ENCODE measurements at regions of chr15 and their contacts with region 1.

Region 1: GRCh38 chr15:81400640-81401236 is 26.7 kb upstream of the TMC3 start:
- DNase-seq: peak in 3 of 9 experiments; percentile 17 to 73 (median 65)
- ATAC-seq: peak; percentile 62
- H3K4me3 ChIP-seq: no peak overlapping the region
- H3K4me3 Mint-ChIP-seq: no peak overlapping the region
- H3K27ac ChIP-seq: no peak overlapping the region
- H3K27ac Mint-ChIP-seq: no peak overlapping the region
- H3K4me1 ChIP-seq: no peaks in the 10 kb centered on the region
- H3K4me1 Mint-ChIP-seq: peaks cover 2% of the 10 kb centered on the region
- H3K27me3 ChIP-seq: no peaks in the 10 kb centered on the region
- H3K27me3 Mint-ChIP-seq: no peaks in the 10 kb centered on the region
- CTCF ChIP-seq: peak; percentile 78

Region 2: GRCh38 chr15:80660122-80660521 is 740.6 kb before region 1 on chr15:
- CTCF ChIA-PET with region 1: no interaction called
- POLR2A ChIA-PET with region 1: no interaction called
- intact Hi-C with region 1: no loop called
- DNase-seq: no peak
- ATAC-seq: no peak
- H3K4me3 ChIP-seq: no peak overlapping the region
- H3K4me3 Mint-ChIP-seq: no peak overlapping the region
- H3K27ac ChIP-seq: no peak overlapping the region
- H3K27ac Mint-ChIP-seq: no peak overlapping the region
- H3K4me1 ChIP-seq: no peaks in the 10 kb centered on the region
- H3K4me1 Mint-ChIP-seq: no peaks in the 10 kb centered on the region
- H3K27me3 ChIP-seq: no peaks in the 10 kb centered on the region
- H3K27me3 Mint-ChIP-seq: peaks cover 24% of the 10 kb centered on the region
- CTCF ChIP-seq: no peak

Region 3: DNA sequence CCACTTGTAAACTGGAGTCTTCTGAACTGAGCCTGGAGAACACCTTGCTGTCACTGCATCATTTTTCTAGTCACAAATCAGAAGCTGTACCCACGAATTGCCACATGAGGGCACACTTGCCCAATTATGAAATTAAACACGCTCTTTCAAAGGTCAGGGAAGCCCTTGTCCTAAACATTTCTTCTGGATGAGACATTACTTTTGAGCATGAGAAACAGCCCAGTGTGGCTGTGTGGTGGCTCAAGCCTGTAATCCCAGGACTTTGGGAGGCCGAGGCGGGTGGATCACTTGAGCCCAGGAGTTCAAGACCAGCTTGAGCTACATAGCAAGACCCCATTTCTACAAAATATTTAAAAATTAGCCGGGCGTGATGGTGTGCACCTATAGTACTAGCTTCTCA is 294.2 kb before region 1 on chr15:
- CTCF ChIA-PET with region 1: interaction called, 4 read pairs
- POLR2A ChIA-PET with region 1: no interaction called
- intact Hi-C with region 1: loop called in 1 of 2 experiments (anchors 1 kb)
- DNase-seq: peak in 5 of 9 experiments; percentile 32 to 67 (median 45)
- ATAC-seq: no peak
- H3K4me3 ChIP-seq: no peak overlapping the region
- H3K4me3 Mint-ChIP-seq: no peak overlapping the region
- H3K27ac ChIP-seq: no peak overlapping the region
- H3K27ac Mint-ChIP-seq: no peak overlapping the region
- H3K4me1 ChIP-seq: no peaks in the 10 kb centered on the region
- H3K4me1 Mint-ChIP-seq: no peaks in the 10 kb centered on the region
- H3K27me3 ChIP-seq: no peaks in the 10 kb centered on the region
- H3K27me3 Mint-ChIP-seq: peaks cover 23% of the 10 kb centered on the region
- CTCF ChIP-seq: peak; percentile 69

Region 4: DNA sequence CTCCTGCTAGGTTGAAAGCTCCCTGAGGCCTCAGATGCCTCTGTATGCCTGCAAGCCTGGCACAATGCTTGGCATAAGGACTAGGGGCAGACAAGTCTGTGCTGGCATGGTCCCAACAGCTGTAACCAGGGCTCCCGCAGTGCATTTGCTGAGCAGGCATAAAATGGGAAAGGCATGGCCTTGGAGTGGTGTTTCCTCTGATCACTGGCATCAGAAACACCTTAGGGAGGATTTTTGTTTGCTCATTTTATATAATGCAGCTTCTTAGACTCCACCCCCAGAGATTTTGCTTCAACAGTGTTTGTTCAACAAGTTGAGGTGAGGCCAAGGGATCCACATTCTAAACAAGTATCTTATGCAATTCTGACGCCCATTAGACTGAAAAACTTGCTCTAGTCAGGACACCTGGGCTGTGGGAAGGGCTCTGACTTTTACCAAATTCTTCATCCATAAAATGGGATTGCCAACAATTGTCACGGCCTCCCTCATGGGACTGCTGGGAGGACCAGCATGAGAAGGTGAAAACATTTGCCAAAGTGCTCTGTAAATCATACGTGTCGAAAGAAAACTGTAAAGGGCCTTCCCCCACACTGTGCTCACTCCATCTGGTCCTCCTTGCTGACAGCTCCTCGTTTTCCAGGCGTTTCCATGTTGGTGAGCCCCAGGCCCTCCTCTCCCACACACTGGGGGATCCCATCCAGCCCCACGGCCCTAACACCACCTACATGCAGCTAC is 119.8 kb before region 1 on chr15:
- CTCF ChIA-PET with region 1: interaction called, 113 read pairs
- POLR2A ChIA-PET with region 1: no interaction called
- intact Hi-C with region 1: no loop called
- DNase-seq: no peak
- ATAC-seq: no peak
- H3K4me3 ChIP-seq: no peak overlapping the region
- H3K4me3 Mint-ChIP-seq: no peak overlapping the region
- H3K27ac ChIP-seq: no peak overlapping the region
- H3K27ac Mint-ChIP-seq: peak overlapping the region; percentile 45
- H3K4me1 ChIP-seq: peaks cover 62% of the 10 kb centered on the region
- H3K4me1 Mint-ChIP-seq: peaks cover 75% of the 10 kb centered on the region
- H3K27me3 ChIP-seq: no peaks in the 10 kb centered on the region
- H3K27me3 Mint-ChIP-seq: no peaks in the 10 kb centered on the region
- CTCF ChIP-seq: no peak

Region 5: GRCh38 chr15:81336568-81336967 is 64.2 kb before region 1 on chr15:
- CTCF ChIA-PET with region 1: interaction called, 9 read pairs
- POLR2A ChIA-PET with region 1: no interaction called
- intact Hi-C with region 1: loop called (anchors 1 to 5 kb)
- DNase-seq: peak in 7 of 9 experiments; percentile 28 to 69 (median 46)
- ATAC-seq: peak; percentile 49
- H3K4me3 ChIP-seq: no peak overlapping the region
- H3K4me3 Mint-ChIP-seq: no peak overlapping the region
- H3K27ac ChIP-seq: no peak overlapping the region
- H3K27ac Mint-ChIP-seq: no peak overlapping the region
- H3K4me1 ChIP-seq: no peaks in the 10 kb centered on the region
- H3K4me1 Mint-ChIP-seq: peaks cover 15% of the 10 kb centered on the region
- H3K27me3 ChIP-seq: no peaks in the 10 kb centered on the region
- H3K27me3 Mint-ChIP-seq: no peaks in the 10 kb centered on the region
- CTCF ChIP-seq: peak; percentile 37

Region 6: DNA sequence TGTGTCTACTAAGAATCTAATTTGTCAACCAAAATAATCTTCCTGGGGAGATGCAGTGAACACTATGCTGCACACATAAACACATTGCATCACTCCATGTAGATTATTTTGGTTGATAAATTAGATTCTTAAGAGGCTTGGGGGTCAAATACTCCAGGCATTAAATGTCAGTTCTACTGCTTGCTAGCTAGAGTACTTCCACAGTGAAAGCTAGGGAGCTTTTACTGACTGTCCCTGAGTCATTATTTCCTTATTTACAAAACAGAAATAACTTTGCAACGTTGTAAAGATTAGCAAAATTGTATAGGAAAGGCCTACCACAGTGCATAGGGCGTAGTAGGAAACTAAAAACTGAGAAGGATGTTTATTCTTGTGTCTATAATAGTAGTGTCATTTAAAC is 13.8 kb before region 1 on chr15:
- CTCF ChIA-PET with region 1: interaction called, 16 read pairs
- POLR2A ChIA-PET with region 1: no interaction called
- intact Hi-C with region 1: no loop called
- DNase-seq: no peak
- ATAC-seq: no peak
- H3K4me3 ChIP-seq: no peak overlapping the region
- H3K4me3 Mint-ChIP-seq: no peak overlapping the region
- H3K27ac ChIP-seq: no peak overlapping the region
- H3K27ac Mint-ChIP-seq: no peak overlapping the region
- H3K4me1 ChIP-seq: no peaks in the 10 kb centered on the region
- H3K4me1 Mint-ChIP-seq: no peaks in the 10 kb centered on the region
- H3K27me3 ChIP-seq: no peaks in the 10 kb centered on the region
- H3K27me3 Mint-ChIP-seq: no peaks in the 10 kb centered on the region
- CTCF ChIP-seq: no peak